Activated CD4-positive, alpha-beta T cell treated with anti-CD3 and anti-CD28 coated beads for 36 hours (primary cell): ENCODE measurements at regions of chr18 and their contacts with region 1.

Region 1: DNA sequence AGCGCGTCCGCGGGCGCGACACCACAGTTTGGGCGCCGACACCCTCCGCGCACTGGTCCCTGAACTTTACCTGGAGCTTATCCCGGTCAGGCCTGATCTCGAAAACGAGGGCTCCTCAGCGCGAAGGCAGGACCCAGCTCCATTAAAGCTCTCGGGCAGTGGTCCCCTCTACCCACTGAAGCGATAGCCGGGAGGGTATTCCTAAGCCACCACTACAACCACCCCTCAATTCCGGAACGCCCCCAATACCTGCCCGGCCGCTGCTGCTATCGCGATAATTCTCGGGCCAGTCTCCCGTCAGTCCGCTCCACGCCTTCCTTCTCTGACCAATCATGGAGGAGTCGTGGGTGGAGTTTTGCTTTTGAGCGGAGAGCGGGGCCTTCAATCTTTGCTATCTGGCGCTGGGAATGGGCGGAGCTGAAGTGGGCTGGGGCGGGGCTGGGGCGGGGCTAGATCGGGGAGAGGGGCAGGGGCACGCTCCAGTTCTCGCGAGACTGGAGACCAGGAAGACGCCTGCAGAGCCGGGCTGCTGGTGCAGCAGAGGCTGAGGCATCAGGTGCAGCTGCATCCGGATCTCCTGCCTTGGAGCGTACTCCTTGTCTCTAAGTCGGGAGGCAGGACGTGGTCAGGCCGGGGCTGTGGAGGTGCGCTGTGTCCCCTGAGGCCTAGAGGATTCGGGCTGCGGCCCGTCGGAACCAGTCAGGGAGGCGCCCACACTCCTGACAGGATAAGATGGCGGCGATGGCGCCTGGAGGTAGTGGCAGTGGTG is at the starts of genes PIGN and RELCH:
- DNase-seq: peak; percentile 97
- ATAC-seq: peak; percentile 94
- H3K4me3 Mint-ChIP-seq: peak within 1 kb of the TSS; percentile 98
- H3K27ac Mint-ChIP-seq: peak within 1 kb of the TSS; percentile 96
- H3K4me1 Mint-ChIP-seq: peaks cover 43% of the 10 kb centered on the region
- H3K27me3 Mint-ChIP-seq: no peaks in the 10 kb centered on the region
- total RNA-seq, gene PIGN: 29.0 to 29.4 TPM
- total RNA-seq, gene RELCH: 20.5 to 20.7 TPM

Region 2: DNA sequence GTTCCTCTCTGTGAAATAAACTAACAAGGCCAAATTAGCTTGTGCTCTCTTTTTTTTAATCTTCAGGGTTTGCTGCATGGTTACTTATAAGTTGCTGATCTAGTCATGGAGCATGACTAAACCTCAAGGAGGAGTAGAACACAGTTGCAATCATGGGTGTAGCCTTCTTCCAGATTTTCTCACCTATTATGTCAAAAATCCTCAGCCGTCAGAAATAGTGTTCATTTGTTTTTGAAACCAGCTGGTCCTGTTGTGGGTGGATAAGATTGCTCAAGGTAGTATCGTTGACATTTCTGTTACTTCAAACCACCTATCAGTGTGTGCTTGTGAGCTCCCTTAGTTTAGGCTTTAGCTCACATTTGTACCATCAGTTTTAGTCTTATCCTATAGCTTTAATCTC is 11.3 kb after region 1 on chr18:
- CTCF ChIA-PET with region 1: interaction called, 14 read pairs
- POLR2A ChIA-PET with region 1: interaction called, 10 read pairs
- intact Hi-C with region 1: no loop called
- DNase-seq: no peak
- ATAC-seq: peak; percentile 84
- H3K4me3 Mint-ChIP-seq: no peak overlapping the region
- H3K27ac Mint-ChIP-seq: no peak overlapping the region
- H3K4me1 Mint-ChIP-seq: peaks cover 61% of the 10 kb centered on the region
- H3K27me3 Mint-ChIP-seq: no peaks in the 10 kb centered on the region

Region 3: DNA sequence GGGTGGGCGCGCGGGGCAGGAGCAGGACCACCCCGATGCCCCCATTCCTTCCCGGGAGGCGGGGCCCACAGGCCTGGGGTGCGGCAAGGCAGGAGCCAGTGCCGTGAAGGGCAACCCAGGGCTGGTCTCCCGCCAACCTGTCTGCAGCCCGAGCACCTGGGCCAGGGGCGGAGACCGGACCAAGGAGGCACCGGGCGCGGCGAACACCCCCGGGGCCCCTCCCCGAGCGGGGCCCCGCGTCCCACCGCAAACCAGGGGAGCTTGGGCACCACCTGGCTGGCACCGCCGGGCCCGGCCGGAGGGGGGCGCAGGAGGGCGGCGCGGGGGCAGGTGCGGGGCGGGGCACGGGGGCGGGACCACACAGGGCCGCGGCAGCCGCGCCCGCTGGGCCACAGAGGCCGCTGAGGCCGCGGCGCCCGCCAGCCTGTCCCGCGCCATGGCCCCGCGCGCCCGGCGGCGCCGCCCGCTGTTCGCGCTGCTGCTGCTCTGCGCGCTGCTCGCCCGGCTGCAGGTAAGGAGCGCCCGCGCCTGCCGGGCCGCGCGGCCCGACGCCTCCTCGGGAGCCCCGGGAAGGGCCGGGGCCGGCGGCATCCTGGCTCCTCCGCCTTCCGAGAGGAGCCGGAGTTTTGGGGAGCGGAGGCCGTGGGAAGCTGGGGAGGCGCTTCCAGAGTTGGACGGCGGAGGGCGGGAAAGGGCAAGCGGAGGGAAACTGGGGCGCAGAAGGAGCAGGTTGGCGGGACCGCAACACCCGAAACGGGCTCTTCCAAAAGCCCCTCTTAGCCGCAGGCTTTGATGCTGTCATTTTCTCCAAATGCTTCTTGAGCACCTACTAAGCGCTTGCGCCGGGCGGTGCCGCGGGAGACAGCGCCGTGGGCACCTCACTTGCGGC is 138.2 kb after region 1 on chr18 and contains the start of gene TNFRSF11A:
- CTCF ChIA-PET with region 1: interaction called, 3 read pairs
- POLR2A ChIA-PET with region 1: no interaction called
- intact Hi-C with region 1: loop called in 1 of 2 experiments (anchors 1 kb)
- DNase-seq: peak; percentile 85
- ATAC-seq: peak; percentile 77
- H3K4me3 Mint-ChIP-seq: peak within 1 kb of the TSS; percentile 78
- H3K27ac Mint-ChIP-seq: peak within 1 kb of the TSS; percentile 64
- H3K4me1 Mint-ChIP-seq: peaks cover 29% of the 10 kb centered on the region
- H3K27me3 Mint-ChIP-seq: peaks cover 70% of the 10 kb centered on the region
- total RNA-seq, gene TNFRSF11A: 6.9 to 9.3 TPM

Region 4: GRCh38 chr18:62584241-62585120 is 397.5 kb after region 1 on chr18:
- CTCF ChIA-PET with region 1: no interaction called
- POLR2A ChIA-PET with region 1: no interaction called
- intact Hi-C with region 1: loop called (anchors 1 to 5 kb)
- DNase-seq: peak; percentile 93
- ATAC-seq: peak; percentile 71
- H3K4me3 Mint-ChIP-seq: peak overlapping the region; percentile 1
- H3K27ac Mint-ChIP-seq: peak overlapping the region; percentile 91
- H3K4me1 Mint-ChIP-seq: peaks cover 39% of the 10 kb centered on the region
- H3K27me3 Mint-ChIP-seq: no peaks in the 10 kb centered on the region

Region 5: DNA sequence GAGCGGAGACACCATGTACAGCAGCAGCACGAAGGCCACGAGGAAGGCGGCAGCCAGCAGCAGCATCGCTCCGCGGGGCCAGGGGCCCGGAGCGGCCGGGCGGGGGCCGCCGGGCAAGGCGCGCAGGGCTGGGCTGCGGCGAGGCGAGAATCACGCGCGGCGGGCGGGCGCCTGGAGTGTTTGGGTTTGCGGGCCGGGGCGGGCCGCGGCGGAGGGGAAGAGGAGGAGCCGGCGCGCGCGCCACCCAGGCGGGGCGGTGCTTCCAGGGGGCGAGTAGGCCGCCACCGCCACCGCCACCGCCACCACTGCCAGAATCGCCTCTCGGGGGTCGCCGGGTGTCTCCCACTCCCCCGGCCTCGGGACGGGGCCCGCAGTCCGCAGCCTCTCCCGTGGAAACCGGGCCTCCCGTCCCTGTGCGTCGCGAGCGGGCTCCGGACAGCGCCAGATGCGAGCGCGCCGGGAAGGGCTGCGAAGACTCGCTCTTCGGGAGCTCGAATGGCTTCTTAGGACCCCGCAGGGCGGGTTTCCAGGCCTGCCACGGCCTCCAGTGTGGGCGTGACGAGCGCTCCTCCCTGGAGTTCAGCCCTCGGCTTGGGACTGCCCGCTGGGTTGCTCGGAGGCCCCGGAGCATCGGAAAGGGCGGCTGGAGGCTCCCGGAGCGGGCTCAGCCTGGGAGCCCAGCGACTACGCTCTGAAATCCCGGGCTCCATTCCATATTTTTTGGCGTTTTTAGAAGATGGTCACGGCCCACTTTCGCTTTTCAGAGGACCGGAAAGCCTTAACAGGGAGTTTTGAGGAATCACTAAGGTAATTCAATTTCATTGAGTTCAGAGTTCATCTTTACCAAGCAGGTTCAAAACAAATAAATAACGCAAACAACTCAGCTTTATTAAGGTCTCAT is 1180.3 kb after region 1 on chr18 and contains the start of gene KDSR:
- CTCF ChIA-PET with region 1: no interaction called
- POLR2A ChIA-PET with region 1: no interaction called
- intact Hi-C with region 1: loop called in 1 of 2 experiments (anchors 2 kb)
- DNase-seq: peak; percentile 92
- ATAC-seq: peak; percentile 85
- H3K4me3 Mint-ChIP-seq: peak within 1 kb of the TSS; percentile 96
- H3K27ac Mint-ChIP-seq: peak within 1 kb of the TSS; percentile 85
- H3K4me1 Mint-ChIP-seq: peaks cover 36% of the 10 kb centered on the region
- H3K27me3 Mint-ChIP-seq: no peaks in the 10 kb centered on the region
- total RNA-seq, gene KDSR: 72.6 to 78.6 TPM